Tibial artery (tissue), 4 donors: ENCODE measurements at regions of chr4 and their contacts with region 1.

Region 1: DNA sequence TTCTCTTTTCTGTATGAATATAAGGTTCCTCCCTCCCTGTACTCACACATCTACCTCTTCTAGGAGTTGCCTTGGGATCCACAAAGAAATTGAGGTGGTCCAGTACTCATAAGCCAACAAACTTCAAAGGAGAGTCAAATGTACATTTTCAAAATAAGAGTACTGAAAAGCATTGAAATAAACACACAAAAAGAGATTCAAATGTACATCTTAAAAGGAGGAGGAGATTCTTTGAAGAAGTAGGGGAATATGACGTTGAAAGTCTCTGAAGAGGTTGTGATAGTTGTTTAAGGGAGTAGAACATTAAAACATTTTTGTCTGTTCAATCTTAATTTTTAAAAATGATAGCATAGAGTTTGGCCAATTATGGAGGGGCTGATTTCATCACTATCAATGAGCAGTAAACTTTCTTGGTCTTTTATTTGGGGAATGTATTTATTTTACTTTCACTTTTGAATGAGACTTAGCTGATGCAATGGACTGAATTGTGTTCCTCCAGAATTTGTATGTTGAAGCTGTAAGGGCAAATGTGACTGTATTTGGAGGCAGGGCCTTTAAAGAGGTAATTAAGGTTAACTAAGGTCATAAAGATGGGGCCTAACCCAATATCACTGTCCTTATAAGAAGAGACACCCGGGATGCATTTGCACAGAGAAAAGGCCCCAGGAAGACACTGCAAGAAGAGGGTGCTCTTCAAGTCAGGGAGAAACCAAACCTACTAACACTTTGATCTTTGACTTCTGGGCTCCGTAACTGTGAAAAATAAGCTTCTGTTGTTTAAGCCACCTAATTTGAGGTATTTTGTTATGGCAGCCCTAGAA is 226.3 kb upstream of the PGRMC2 start:
- DNase-seq: no peak
- H3K4me3 ChIP-seq: no peak overlapping the region
- H3K27ac ChIP-seq: no peak overlapping the region
- H3K4me1 ChIP-seq: peaks cover 0 to 24% (median 18%) of the 10 kb centered on the region in 4 donors
- H3K27me3 ChIP-seq: no peaks in the 10 kb centered on the region
- CTCF ChIP-seq: no peak

Region 2: DNA sequence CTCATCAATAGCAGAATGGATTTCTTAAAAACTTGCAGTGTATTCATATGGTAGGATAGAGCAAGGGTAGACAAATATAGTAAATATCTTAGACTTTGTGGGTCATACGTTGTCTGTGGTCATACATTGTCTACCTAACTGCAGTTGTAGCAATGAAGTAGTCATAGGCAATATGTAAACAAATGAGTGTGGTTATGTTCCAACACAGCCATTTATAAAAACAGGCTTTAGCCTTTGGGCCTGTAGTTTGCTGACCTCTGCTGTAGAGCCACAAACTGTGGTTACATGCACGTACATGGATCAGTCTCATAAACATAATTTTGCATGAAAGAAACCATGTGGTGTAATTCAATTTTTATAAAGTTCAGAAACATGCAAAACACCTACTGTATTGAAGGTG is 353.9 kb before region 1 on chr4:
- intact Hi-C with region 1: no loop called
- DNase-seq: no peak
- H3K4me3 ChIP-seq: no peak overlapping the region
- H3K27ac ChIP-seq: no peak overlapping the region
- H3K4me1 ChIP-seq: peaks cover 0 to 17% (median 2%) of the 10 kb centered on the region in 4 donors
- H3K27me3 ChIP-seq: no peaks in the 10 kb centered on the region
- CTCF ChIP-seq: no peak

Region 3: DNA sequence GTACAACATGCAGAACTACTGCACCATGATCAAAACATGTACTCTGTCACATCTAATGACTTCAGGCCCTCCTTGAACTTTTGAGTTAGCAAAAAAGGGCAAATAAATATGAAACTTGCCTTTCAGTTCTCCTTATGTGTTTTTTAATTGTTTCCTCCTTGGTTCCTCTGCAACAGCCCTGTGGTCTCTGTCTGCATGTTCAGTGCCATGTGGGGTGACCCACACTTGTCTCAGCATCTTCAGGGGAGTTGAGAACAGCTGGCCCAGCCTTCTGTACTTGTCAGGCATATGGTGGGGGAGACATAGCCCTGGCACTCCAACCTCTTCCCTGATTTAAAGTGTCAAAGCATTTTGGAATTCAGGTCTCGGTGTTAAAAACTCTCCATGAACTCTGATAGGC is 38.3 kb before region 1 on chr4:
- intact Hi-C with region 1: loop called (anchors 2 kb)
- DNase-seq: no peak
- H3K4me3 ChIP-seq: no peak overlapping the region
- H3K27ac ChIP-seq: no peak overlapping the region
- H3K4me1 ChIP-seq: no peaks in the 10 kb centered on the region
- H3K27me3 ChIP-seq: no peaks in the 10 kb centered on the region
- CTCF ChIP-seq: no peak